Activated CD4-positive, alpha-beta T cell treated with anti-CD3 and anti-CD28 coated beads, Interleukin-2, amount 10 ng/mL, durations not matched to agents 24 days and 14 days (primary cell): ENCODE measurements at regions of chr16 and their contacts with region 1.

Region 1: GRCh38 chr16:12067714-12068401 is 91.3 kb downstream of the SNX29 start:
- DNase-seq: peak; percentile 89
- H3K4me3 Mint-ChIP-seq: no peak overlapping the region
- H3K27ac Mint-ChIP-seq: no peak overlapping the region
- H3K4me1 Mint-ChIP-seq: peaks cover 2% of the 10 kb centered on the region
- H3K27me3 Mint-ChIP-seq: no peaks in the 10 kb centered on the region

Region 2: DNA sequence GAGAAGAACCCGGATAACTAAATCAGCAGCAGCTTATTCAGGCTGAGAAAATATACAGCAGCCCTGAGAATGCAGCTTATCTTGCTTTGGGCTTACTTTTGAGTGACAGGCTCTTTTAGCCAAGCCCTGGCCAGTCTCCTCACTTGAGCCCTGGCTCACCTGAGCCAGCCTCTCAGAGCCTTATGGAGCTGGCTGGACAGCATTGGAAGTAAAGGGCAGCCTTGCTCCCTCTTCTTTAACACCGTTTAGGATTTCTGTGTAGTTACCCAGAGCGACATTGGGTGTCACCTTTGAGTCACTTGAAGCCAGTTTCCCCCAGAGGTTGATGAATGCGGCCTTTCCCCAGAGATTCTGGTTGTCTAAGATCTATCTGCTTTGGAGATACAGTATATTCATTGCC is 118.3 kb before region 1 on chr16:
- intact Hi-C with region 1: loop called (anchors 1 kb)
- DNase-seq: peak; percentile 68
- H3K4me3 Mint-ChIP-seq: no peak overlapping the region
- H3K27ac Mint-ChIP-seq: no peak overlapping the region
- H3K4me1 Mint-ChIP-seq: no peaks in the 10 kb centered on the region
- H3K27me3 Mint-ChIP-seq: no peaks in the 10 kb centered on the region

Region 3: GRCh38 chr16:11977376-11978041 is 90.3 kb before region 1 on chr16:
- intact Hi-C with region 1: loop called (anchors 10 kb)
- DNase-seq: peak; percentile 56
- H3K4me3 Mint-ChIP-seq: peak overlapping the region; percentile 98
- H3K27ac Mint-ChIP-seq: peak overlapping the region; percentile 57
- H3K4me1 Mint-ChIP-seq: peaks cover 30% of the 10 kb centered on the region
- H3K27me3 Mint-ChIP-seq: no peaks in the 10 kb centered on the region

Region 4: DNA sequence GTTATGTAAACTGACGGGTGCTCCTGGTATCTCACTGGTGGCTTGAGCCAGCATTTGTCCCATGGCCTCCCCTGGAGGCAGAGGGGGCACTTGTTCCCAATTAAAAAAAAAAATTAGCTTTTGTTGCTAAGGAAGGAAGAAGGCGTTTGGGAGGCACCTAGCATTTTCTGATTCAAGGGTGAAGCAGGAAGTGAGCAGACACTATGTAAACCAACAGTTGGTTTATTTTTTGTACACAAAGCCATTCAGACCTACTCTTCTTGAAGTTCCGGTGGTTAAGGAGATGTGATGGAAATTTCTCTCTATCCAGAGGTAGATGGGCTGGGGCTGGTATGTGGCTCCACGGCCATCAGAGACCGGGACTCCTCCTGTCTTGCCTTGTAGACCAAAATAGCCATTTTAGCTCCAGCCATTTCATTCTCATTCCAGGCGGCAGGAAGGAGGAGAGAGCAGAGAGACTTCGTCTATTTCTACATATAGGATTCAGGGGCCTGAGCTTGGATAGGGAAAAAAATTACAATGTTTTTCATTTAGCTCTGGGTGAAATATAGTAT is 11.6 kb after region 1 on chr16:
- intact Hi-C with region 1: no loop called
- DNase-seq: peak; percentile 76
- H3K4me3 Mint-ChIP-seq: peak overlapping the region; percentile 71
- H3K27ac Mint-ChIP-seq: peak overlapping the region; percentile 99
- H3K4me1 Mint-ChIP-seq: peaks cover 63% of the 10 kb centered on the region
- H3K27me3 Mint-ChIP-seq: no peaks in the 10 kb centered on the region